HAP-1 (cell line): ENCODE measurements at regions of chr20 and their contacts with region 1.

Region 1: GRCh38 chr20:56974499-56975236 is 291.8 kb downstream of the BMP7 start:
- DNase-seq: peak; percentile 64 to 88
- H3K4me3 ChIP-seq: no peak overlapping the region
- H3K4me1 ChIP-seq: peaks cover 23% of the 10 kb centered on the region
- H3K27me3 ChIP-seq: no peaks in the 10 kb centered on the region

Region 2: GRCh38 chr20:55947701-55948100 is 1027.0 kb before region 1 on chr20:
- in situ Hi-C with region 1: no loop called
- DNase-seq: no peak
- H3K4me3 ChIP-seq: no peak overlapping the region
- H3K4me1 ChIP-seq: no peaks in the 10 kb centered on the region
- H3K27me3 ChIP-seq: no peaks in the 10 kb centered on the region

Region 3: DNA sequence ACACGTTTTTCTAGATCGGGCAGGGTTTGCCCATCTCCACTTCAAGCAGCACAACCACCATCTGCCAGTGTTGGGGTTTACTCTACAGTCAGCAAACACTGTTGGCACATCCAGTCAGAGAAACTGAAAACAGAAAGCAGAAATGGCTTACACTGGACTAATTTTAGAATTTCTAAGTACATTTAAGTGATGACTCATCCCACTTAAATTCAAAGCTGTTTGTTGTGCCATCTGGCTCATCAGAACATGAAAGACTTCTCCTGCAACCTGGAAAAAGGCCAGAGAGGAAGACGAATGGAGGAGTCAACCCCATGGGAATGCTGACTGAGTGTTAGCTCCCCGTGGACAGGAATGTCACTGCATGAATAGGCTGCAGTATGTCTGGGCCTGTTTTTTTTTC is 419.8 kb before region 1 on chr20:
- in situ Hi-C with region 1: loop called (anchors 5 kb)
- DNase-seq: peak; percentile 73 to 74
- H3K4me3 ChIP-seq: no peak overlapping the region
- H3K4me1 ChIP-seq: peaks cover 9% of the 10 kb centered on the region
- H3K27me3 ChIP-seq: no peaks in the 10 kb centered on the region

Region 4: DNA sequence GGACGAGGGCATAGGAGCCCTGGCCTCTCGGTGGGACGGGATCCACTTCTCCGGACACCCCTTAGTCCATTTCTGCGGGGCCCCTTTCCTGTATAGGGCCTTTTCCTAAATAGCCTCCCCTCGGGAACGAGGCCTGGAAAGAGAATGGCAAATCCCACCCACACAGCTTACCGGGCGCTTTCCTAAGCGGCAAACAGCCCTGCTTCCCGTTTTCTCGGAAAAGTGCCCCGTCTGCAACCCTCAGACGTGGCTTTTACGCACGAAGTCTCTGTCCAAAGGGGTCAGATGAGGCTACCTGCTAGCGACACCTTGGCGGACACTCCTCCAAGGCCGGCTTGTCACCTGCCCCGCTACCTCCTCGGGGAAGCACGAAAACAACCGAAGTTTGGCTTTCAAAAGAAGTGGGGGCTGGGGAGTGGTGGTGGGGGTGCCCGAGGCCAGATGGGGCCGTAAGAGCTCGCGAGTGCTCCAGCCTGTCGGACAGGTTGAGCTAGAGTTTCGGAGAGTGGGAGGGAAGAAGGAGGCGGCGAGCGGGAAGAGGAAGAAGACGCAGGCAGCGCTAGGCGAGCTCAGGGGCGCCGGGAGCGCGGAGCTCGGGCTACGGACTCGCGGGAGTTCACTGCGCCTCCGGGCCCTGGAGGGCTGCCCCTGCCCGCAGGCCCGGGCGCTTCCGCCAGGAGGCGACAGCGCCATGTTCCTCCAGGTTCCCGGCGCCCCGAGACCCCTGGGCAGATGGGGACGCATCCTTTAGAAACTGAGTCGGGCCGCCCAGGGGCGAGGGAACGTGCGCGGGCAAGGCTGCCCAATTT is 344.8 kb before region 1 on chr20:
- in situ Hi-C with region 1: loop called (anchors 5 kb)
- DNase-seq: peak; percentile 83 to 87
- H3K4me3 ChIP-seq: peak overlapping the region; percentile 80
- H3K4me1 ChIP-seq: peaks cover 36% of the 10 kb centered on the region
- H3K27me3 ChIP-seq: no peaks in the 10 kb centered on the region